ENCODE measurements at regions of chr3 and their contacts with region 1.

Region 1: DNA sequence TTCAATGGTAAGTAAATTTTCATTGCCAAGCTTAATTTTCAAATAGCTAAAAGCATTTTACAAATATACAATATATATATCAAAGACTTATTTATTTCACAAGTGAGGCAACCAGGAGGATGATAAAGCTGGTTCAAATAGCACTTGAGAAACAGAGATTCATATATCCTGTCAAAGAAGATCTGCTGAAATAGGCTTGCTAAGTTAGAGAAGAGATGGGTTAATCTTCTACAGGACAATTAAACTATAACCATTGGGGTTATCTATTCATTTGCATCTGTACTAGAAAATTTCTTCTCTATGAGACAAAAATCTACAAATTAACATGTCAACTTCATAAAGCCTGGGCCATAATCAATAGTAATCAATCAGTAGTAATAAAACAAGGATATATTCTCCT is 637.7 kb upstream of the UBE2E2 start:
- DNase-seq: no peak
- ATAC-seq: no peak

Region 2: GRCh38 chr3:21654662-21655061 is 910.7 kb before region 1 on chr3:
- intact Hi-C with region 1: no loop called
- DNase-seq: no peak
- ATAC-seq: no peak

Region 3: GRCh38 chr3:22858486-22858885 is 293.1 kb after region 1 on chr3:
- intact Hi-C with region 1: no loop called
- DNase-seq: no peak
- ATAC-seq: no peak

Region 4: GRCh38 chr3:22960105-22960984 is 395.0 kb after region 1 on chr3:
- intact Hi-C with region 1: loop called (anchors 2 kb)
- DNase-seq: peak; percentile 43
- ATAC-seq: peak; percentile 71